Spleen (tissue), 13 donors: ENCODE measurements at regions of chr10 and their contacts with region 1.

Region 1: DNA sequence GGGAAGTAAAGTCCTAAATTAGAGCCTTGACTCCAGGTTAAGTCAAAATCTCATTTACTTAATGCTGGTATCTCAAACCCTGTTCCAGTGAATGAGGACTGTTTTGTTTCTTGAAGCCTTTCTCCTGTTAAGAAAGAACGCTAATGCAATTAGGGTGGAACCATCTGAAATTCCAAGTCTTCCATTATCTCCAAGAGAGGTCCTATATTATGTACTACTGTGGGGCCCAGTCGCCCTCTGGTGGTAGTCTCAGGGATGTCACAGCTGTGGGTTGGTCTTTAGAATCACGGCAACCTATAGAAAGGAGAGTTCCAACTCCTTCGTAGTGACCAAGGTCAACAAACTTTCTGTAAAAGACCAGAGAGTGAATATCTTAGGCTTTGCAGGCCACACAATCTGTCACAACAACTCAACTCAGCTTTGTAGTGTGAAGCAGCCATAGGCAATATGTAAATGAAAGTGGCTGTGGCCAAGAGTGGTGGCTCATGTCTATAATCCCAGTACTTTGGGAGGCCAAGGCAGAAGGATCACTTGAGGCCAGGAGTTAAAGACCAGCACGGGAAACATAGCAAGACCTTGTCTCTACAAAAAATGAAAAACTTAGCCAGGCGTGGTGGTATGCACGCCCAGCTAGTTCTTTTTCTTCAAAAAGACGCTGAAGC is 9.3 kb downstream of the RPP38 start:
- DNase-seq: peak; percentile 86
- H3K4me3 ChIP-seq: no peak overlapping the region
- H3K27ac ChIP-seq: peak overlapping the region in 1 of 8 donors; percentile 25
- H3K4me1 ChIP-seq: peaks cover 0 to 16% (median 5%) of the 10 kb centered on the region in 6 donors
- H3K27me3 ChIP-seq: no peaks in the 10 kb centered on the region
- CTCF ChIP-seq: peak; percentile 69 to 90 (median 85)
- POLR2A ChIP-seq: no peak

Region 2: GRCh38 chr10:14491806-14492205 is 614.7 kb before region 1 on chr10:
- intact Hi-C with region 1: loop called (anchors 10 kb)
- DNase-seq: no peak
- H3K4me3 ChIP-seq: no peak overlapping the region
- H3K27ac ChIP-seq: no peak overlapping the region
- H3K4me1 ChIP-seq: peaks cover 0 to 15% (median 2%) of the 10 kb centered on the region in 6 donors
- H3K27me3 ChIP-seq: peaks cover 0 to 13% (median 0%) of the 10 kb centered on the region in 7 donors
- CTCF ChIP-seq: no peak
- POLR2A ChIP-seq: no peak

Region 3: GRCh38 chr10:14954001-14954770 is 152.3 kb before region 1 on chr10 and contains the start of gene DCLRE1C:
- intact Hi-C with region 1: no loop called
- DNase-seq: peak; percentile 96
- H3K4me3 ChIP-seq: peak within 1 kb of the TSS; percentile 64 to 93 (median 79)
- H3K27ac ChIP-seq: peak within 1 kb of the TSS; percentile 90 to 97 (median 92)
- H3K4me1 ChIP-seq: peaks cover 15 to 62% (median 50%) of the 10 kb centered on the region in 6 donors
- H3K27me3 ChIP-seq: no peaks in the 10 kb centered on the region
- CTCF ChIP-seq: peak in 1 of 11 experiments; percentile 12
- POLR2A ChIP-seq: no peak
- total RNA-seq, gene DCLRE1C: 23.0 to 35.6 (median 27.3) TPM